ENCODE measurements at regions of chr2 and their contacts with region 1.

Region 1: DNA sequence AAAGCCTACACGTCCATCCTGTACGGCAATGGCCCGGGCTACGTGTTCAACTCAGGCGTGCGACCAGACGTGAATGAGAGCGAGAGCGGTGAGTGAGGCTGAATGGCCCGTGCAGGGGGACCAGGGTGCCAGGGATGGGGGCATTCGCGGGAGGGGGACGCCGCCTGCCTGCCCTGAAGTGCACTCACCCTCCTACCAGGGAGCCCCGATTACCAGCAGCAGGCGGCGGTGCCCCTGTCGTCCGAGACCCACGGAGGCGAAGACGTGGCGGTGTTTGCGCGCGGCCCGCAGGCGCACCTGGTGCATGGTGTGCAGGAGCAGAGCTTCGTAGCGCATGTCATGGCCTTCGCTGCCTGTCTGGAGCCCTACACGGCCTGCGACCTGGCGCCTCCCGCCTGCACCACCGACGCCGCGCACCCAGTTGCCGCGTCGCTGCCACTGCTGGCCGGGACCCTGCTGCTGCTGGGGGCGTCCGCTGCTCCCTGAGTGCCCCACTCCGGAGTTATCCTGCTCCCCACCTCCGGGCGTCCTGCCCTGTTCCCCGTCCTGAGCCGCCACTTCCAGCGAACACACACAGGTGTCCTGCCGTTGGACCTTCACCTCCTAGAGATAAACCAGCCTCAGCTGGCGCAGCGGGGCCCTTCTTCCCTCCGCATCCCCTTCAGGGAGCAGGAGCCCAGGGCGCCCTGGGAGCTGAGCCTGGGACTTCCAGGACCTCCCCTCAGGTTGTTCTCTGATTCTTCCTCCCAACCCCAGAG is 2.9 kb downstream of the ALPI start:
- DNase-seq: no peak
- H3K4me3 ChIP-seq: no peak overlapping the region
- H3K27ac ChIP-seq: no peak overlapping the region
- H3K4me1 ChIP-seq: peaks cover 0 to 3% (median 0%) of the 10 kb centered on the region in 4 experiments; a peak in 1 of 7 replicates
- H3K27me3 ChIP-seq: no peaks in the 10 kb centered on the region
- CTCF ChIP-seq: no peak
- EP300 ChIP-seq: no peak
- POLR2A ChIP-seq: no peak
- RAD21 ChIP-seq: no peak

Region 2: DNA sequence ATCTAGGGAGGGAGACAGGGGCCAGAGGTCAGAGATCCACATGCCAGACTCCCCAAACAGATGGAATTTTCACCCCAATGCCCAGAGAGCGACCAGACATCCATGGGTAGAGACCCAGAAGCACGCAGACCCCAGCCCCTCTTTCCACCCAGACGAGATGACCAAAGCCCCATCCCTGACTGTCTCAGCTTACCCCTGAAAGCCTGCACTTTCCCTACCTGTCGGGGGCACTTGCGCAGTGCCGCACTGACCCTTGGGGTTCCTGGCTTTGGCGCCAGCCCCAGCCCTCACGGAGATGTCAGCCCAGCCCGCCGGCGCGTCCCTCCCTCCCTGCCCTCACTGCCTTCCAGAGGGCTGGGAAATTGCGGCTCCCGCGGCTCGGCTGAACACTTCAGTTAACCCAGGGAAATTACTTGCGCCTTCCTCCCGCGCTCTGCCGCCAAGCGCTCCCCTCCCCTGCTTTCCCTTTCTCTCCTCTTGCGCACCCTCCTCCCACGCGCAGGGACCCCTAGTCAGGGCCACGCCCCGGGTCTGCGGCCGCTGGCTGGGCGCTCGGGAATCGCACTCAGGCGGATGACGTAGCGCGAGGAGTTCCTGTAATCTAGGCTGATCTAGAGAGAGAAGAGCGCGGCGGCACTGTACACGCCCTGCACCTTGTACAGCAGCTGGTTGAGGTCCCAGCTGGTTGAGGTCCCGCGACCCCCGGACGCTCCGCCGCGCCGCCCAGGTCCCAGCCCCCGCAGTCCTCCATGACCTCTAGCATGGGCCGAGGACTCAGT is 40.2 kb before region 1 on chr2:
- CTCF ChIA-PET with region 1: no interaction called
- POLR2A ChIA-PET with region 1: no interaction called
- DNase-seq: peak in 1 of 2 experiments; percentile 63
- H3K4me3 ChIP-seq: peak overlapping the region; percentile 69 to 95 (median 76)
- H3K27ac ChIP-seq: no peak overlapping the region
- H3K4me1 ChIP-seq: peaks cover 4 to 34% (median 22%) of the 10 kb centered on the region in 4 experiments
- H3K27me3 ChIP-seq: peaks cover 12 to 40% (median 36%) of the 10 kb centered on the region in 4 experiments
- CTCF ChIP-seq: no peak
- EP300 ChIP-seq: no peak
- POLR2A ChIP-seq: no peak
- RAD21 ChIP-seq: no peak

Region 3: DNA sequence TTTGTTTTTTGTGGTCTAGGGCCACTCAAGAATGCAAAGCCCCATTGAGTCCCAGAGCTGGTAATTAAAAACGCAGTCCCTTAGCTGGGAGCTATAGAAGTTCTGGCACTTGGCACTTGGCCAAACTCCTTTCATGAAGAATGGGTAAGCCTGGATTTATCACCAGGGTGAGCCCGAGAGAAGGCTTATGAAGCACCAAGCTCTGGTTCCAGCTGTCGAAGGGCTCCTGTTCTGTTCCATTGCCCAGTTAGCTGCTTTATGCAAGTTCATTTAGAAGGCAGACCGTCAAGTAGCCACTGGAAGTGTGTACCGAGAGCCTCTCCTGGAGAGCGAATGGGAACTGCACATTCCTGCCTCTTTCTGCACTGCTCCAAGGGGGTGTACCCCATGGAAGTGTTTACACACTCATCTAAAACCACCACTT is 14.6 kb after region 1 on chr2:
- CTCF ChIA-PET with region 1: interaction called, 66 read pairs
- POLR2A ChIA-PET with region 1: interaction called, 4 read pairs
- DNase-seq: no peak
- H3K4me3 ChIP-seq: no peak overlapping the region
- H3K27ac ChIP-seq: no peak overlapping the region
- H3K4me1 ChIP-seq: no peaks in the 10 kb centered on the region; a peak in 1 of 7 replicates
- H3K27me3 ChIP-seq: no peaks in the 10 kb centered on the region; a peak in 1 of 7 replicates
- CTCF ChIP-seq: no peak
- EP300 ChIP-seq: no peak
- POLR2A ChIP-seq: no peak
- RAD21 ChIP-seq: no peak

Region 4: DNA sequence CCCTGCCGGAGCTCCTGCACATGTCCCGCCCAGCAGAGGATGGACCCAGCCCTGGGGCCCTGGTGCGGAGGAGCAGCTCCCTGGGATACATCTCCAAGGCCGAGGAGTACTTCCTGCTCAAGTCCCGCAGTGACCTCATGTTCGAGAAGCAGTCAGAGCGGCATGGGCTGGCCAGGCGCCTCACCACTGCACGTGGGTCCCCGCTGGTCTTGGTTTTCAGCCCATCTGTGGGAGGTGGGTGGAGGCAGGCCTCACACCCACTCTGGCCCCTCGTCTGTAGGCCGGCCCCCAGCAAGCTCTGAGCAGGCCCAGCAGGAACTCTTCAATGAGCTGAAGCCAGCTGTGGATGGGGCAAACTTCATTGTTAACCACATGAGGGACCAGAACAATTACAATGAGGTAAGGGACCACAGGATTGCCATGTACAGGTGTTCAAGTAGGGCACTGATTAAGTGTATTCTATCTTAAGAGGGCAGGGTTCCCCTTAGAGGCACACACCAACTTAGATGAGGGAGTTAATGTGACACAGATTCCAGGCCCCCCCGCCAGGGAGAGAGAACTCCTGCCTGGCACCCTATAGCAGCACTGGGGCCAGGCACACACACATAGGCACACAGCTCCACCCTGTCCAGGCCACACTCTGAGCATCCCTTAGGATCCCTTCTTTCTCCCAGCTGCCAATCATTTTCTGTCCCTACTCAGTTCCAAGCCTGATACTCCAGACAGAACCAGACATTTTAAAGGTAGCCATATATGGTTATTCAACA is 75.3 kb after region 1 on chr2:
- CTCF ChIA-PET with region 1: no interaction called
- POLR2A ChIA-PET with region 1: no interaction called
- DNase-seq: no peak
- H3K4me3 ChIP-seq: no peak overlapping the region
- H3K27ac ChIP-seq: no peak overlapping the region
- H3K4me1 ChIP-seq: peaks cover 0 to 12% (median 6%) of the 10 kb centered on the region in 4 experiments; a peak in 6 of 7 replicates
- H3K27me3 ChIP-seq: no peaks in the 10 kb centered on the region
- CTCF ChIP-seq: no peak
- EP300 ChIP-seq: no peak
- POLR2A ChIP-seq: no peak
- RAD21 ChIP-seq: no peak

Region 5: GRCh38 chr2:232574674-232575403 is 116.0 kb after region 1 on chr2:
- CTCF ChIA-PET with region 1: no interaction called
- POLR2A ChIA-PET with region 1: no interaction called
- DNase-seq: no peak
- H3K4me3 ChIP-seq: no peak overlapping the region
- H3K27ac ChIP-seq: no peak overlapping the region
- H3K4me1 ChIP-seq: no peaks in the 10 kb centered on the region
- H3K27me3 ChIP-seq: no peaks in the 10 kb centered on the region
- CTCF ChIP-seq: no peak
- EP300 ChIP-seq: no peak
- POLR2A ChIP-seq: no peak
- RAD21 ChIP-seq: no peak